Naive thymus-derived CD4-positive, alpha-beta T cell (primary cell): ENCODE measurements at regions of chr7 and their contacts with region 1.

Region 1: GRCh38 chr7:93723424-93724124 is 149.1 kb upstream of the CALCR start:
- DNase-seq: no peak
- ATAC-seq: no peak
- H3K4me3 ChIP-seq: no peak overlapping the region
- H3K4me3 Mint-ChIP-seq: no peak overlapping the region
- H3K27ac ChIP-seq: no peak overlapping the region
- H3K27ac Mint-ChIP-seq: no peak overlapping the region
- H3K4me1 ChIP-seq: no peaks in the 10 kb centered on the region
- H3K4me1 Mint-ChIP-seq: no peaks in the 10 kb centered on the region
- H3K27me3 ChIP-seq: no peaks in the 10 kb centered on the region
- H3K27me3 Mint-ChIP-seq: peaks cover 0 to 5% (median 0%) of the 10 kb centered on the region in 5 donors

Region 2: GRCh38 chr7:92682903-92683539 is 1040.6 kb before region 1 on chr7:
- CTCF ChIA-PET with region 1: no interaction called
- POLR2A ChIA-PET with region 1: no interaction called
- intact Hi-C with region 1: no loop called
- DNase-seq: peak in 7 of 9 donors; percentile 20 to 62 (median 46)
- ATAC-seq: peak; percentile 70
- H3K4me3 ChIP-seq: no peak overlapping the region
- H3K4me3 Mint-ChIP-seq: peak overlapping the region; percentile 22 to 66 (median 58)
- H3K27ac ChIP-seq: peak overlapping the region; percentile 70
- H3K27ac Mint-ChIP-seq: peak overlapping the region; percentile 27 to 87 (median 81)
- H3K4me1 ChIP-seq: peaks cover 32 to 54% of the 10 kb centered on the region in 2 donors
- H3K4me1 Mint-ChIP-seq: peaks cover 51 to 89% (median 86%) of the 10 kb centered on the region in 7 donors
- H3K27me3 ChIP-seq: no peaks in the 10 kb centered on the region
- H3K27me3 Mint-ChIP-seq: no peaks in the 10 kb centered on the region

Region 3: GRCh38 chr7:93414628-93415027 is 308.9 kb before region 1 on chr7:
- CTCF ChIA-PET with region 1: no interaction called
- POLR2A ChIA-PET with region 1: no interaction called
- intact Hi-C with region 1: no loop called
- DNase-seq: no peak
- ATAC-seq: no peak
- H3K4me3 ChIP-seq: no peak overlapping the region
- H3K4me3 Mint-ChIP-seq: no peak overlapping the region
- H3K27ac ChIP-seq: no peak overlapping the region
- H3K27ac Mint-ChIP-seq: no peak overlapping the region
- H3K4me1 ChIP-seq: no peaks in the 10 kb centered on the region
- H3K4me1 Mint-ChIP-seq: no peaks in the 10 kb centered on the region
- H3K27me3 ChIP-seq: no peaks in the 10 kb centered on the region
- H3K27me3 Mint-ChIP-seq: peaks cover 0 to 14% (median 7%) of the 10 kb centered on the region in 5 donors

Region 4: DNA sequence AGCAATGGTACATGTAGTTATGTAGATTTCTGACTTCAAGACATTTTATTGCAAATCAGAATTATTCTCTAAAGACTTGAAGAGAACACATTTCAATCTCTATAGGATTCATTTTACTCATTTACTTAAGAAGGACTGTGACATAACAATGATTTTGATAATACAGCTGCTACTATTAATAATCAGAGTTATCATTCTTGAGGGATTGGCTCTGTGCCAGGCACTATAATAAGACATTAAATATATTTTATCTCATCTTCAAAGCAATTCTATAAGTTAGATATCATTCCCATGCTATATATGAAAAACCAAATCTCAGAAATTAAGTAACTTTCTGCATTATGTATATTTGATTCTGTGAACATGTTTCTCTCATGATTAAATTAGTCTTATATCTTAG is 45.4 kb before region 1 on chr7:
- CTCF ChIA-PET with region 1: no interaction called
- POLR2A ChIA-PET with region 1: no interaction called
- intact Hi-C with region 1: loop called in 1 of 2 experiments (anchors 2 kb)
- DNase-seq: no peak
- ATAC-seq: no peak
- H3K4me3 ChIP-seq: no peak overlapping the region
- H3K4me3 Mint-ChIP-seq: no peak overlapping the region
- H3K27ac ChIP-seq: no peak overlapping the region
- H3K27ac Mint-ChIP-seq: no peak overlapping the region
- H3K4me1 ChIP-seq: no peaks in the 10 kb centered on the region
- H3K4me1 Mint-ChIP-seq: no peaks in the 10 kb centered on the region
- H3K27me3 ChIP-seq: no peaks in the 10 kb centered on the region
- H3K27me3 Mint-ChIP-seq: no peaks in the 10 kb centered on the region

Region 5: DNA sequence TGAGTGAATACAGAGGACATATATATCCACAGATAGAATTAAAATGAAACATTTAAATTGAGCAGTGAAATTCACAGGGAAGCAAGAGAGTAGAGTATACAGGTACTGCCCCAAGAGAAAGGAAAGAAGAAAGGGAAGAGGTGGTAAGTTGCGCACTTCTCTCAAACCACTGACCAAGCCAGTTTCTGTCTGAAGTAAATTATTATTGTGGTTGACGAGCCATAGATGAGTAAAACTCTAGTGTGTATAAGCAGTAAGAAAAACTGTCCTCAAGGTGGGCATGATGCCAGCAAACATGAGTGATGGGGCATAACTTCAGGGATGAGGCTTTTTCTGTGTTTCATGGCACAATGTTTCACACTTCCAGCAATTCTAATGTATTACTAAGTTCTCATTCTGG is 285.0 kb after region 1 on chr7:
- CTCF ChIA-PET with region 1: no interaction called
- POLR2A ChIA-PET with region 1: no interaction called
- intact Hi-C with region 1: no loop called
- DNase-seq: no peak
- ATAC-seq: no peak
- H3K4me3 ChIP-seq: no peak overlapping the region
- H3K4me3 Mint-ChIP-seq: no peak overlapping the region
- H3K27ac ChIP-seq: no peak overlapping the region
- H3K27ac Mint-ChIP-seq: no peak overlapping the region
- H3K4me1 ChIP-seq: peaks cover 0 to 6% of the 10 kb centered on the region in 2 donors
- H3K4me1 Mint-ChIP-seq: peaks cover 0 to 16% (median 14%) of the 10 kb centered on the region in 7 donors
- H3K27me3 ChIP-seq: no peaks in the 10 kb centered on the region
- H3K27me3 Mint-ChIP-seq: peaks cover 7 to 28% (median 11%) of the 10 kb centered on the region in 5 donors